ENCODE measurements at regions of chr3 and their contacts with region 1.

Region 1: DNA sequence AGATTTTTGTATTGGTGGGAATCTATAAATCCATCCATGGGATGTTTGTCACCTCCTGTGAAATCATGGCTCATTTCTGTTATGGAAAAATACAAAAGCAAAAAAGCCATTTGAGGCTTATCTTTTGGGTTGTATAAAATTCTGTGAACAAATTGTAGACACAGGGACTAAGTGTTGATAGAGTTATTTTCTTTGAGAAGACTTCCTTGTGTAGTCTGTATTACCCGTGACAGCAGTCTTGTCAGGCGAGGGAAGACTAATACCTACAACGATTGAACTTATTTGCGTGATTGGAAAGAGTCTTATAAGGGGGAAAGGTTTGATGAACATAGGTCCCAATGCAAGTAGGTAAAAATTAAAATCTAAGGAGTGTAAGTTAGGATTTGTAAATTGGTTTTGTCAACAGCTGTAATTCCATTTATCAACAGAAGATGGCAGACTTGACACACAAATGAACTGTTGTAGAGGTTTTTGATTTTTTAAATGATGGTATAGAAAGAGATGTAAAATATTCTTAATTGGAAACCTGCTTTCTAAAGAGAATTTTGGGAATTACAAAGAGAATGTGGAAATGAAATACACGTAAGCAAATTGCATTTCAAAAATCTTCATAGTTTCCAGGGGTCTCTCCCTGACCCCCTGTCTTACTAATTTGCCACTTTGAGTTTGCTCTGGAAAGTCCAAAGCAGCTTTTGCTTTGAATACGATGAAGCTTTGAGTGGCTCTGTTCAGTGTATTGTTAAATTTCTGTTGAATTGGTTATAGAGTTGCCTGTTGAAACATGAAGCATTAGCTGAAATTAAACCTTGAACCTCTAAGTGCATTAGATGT is 33.2 kb downstream of the SLC25A26 start:
- DNase-seq: peak; percentile 49
- H3K4me3 Mint-ChIP-seq: no peak overlapping the region
- H3K27ac Mint-ChIP-seq: no peak overlapping the region
- H3K4me1 Mint-ChIP-seq: no peaks in the 10 kb centered on the region
- H3K27me3 Mint-ChIP-seq: no peaks in the 10 kb centered on the region
- CTCF ChIP-seq: peak; percentile 59

Region 2: DNA sequence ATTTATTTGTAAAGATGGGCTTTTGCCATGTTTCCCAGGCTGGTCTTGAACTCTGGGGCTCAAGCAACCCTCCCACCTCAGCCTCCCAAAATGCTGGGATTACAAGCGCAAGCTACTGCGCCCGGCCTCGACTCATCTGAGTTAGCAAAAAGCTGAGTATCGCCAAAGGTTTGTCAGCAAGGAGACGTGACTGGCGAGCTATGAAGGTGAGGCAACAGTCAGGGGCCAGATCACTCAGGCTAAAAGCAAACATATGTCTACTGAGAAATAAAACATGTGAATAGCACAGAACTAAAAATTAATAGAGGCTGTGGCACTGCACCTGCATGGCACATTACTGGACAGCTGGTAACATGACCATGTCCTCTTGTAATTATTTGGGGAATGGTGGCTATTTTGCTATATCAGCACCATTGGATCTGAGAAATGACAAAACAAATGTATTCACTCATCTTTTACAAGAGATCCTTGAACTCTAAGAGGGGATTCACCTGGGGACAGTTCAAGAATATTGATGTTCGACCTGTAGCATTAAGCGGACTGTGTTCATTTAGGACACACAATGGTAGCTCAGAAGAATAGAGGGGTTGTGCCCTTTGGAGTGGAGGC is 43.2 kb before region 1 on chr3:
- CTCF ChIA-PET with region 1: no interaction called
- POLR2A ChIA-PET with region 1: no interaction called
- intact Hi-C with region 1: no loop called
- DNase-seq: no peak
- H3K4me3 Mint-ChIP-seq: no peak overlapping the region
- H3K27ac Mint-ChIP-seq: no peak overlapping the region
- H3K4me1 Mint-ChIP-seq: no peaks in the 10 kb centered on the region
- H3K27me3 Mint-ChIP-seq: peaks cover 3% of the 10 kb centered on the region
- CTCF ChIP-seq: no peak

Region 3: DNA sequence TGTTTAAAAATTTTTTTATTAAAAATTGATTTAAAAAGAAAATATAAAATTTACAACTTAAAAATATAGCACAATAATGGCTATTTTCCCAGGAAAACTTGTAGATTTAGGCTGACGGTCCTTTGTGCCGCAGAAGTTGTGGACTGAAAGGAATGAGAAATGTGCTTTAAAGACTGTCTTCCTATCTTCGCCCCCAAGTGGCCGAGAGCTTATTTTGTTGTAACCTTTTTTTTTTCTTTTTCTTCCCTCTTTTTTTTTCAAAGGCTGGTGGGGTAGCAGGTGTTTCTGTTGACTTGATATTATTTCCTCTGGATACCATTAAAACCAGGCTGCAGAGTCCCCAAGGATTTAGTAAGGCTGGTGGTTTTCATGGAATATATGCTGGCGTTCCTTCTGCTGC is 17.7 kb before region 1 on chr3:
- CTCF ChIA-PET with region 1: interaction called, 24 read pairs
- POLR2A ChIA-PET with region 1: no interaction called
- intact Hi-C with region 1: no loop called
- DNase-seq: peak; percentile 5
- H3K4me3 Mint-ChIP-seq: no peak overlapping the region
- H3K27ac Mint-ChIP-seq: no peak overlapping the region
- H3K4me1 Mint-ChIP-seq: no peaks in the 10 kb centered on the region
- H3K27me3 Mint-ChIP-seq: no peaks in the 10 kb centered on the region
- CTCF ChIP-seq: no peak

Region 4: DNA sequence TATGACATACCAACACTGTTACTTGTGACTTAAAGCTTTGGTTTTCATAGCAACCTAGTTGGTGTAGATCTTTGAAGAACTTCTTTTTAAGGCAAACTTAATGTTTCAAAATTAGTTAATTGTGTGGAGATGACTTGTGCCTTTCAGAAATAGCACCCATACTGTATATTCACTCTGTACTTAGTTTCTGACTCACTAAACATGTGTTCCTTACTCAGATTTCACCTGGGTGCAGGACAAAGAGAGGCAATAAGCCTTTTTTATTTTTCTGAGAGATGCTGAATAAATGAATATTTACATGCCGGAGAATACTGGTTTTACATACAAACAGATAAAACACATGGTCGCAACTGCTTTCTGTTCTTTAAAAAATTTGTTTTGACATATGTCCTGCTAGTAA is 11.6 kb after region 1 on chr3:
- CTCF ChIA-PET with region 1: interaction called, 10 read pairs
- POLR2A ChIA-PET with region 1: interaction called, 6 read pairs
- intact Hi-C with region 1: no loop called
- DNase-seq: no peak
- H3K4me3 Mint-ChIP-seq: no peak overlapping the region
- H3K27ac Mint-ChIP-seq: no peak overlapping the region
- H3K4me1 Mint-ChIP-seq: peaks cover 6% of the 10 kb centered on the region
- H3K27me3 Mint-ChIP-seq: no peaks in the 10 kb centered on the region
- CTCF ChIP-seq: no peak

Region 5: DNA sequence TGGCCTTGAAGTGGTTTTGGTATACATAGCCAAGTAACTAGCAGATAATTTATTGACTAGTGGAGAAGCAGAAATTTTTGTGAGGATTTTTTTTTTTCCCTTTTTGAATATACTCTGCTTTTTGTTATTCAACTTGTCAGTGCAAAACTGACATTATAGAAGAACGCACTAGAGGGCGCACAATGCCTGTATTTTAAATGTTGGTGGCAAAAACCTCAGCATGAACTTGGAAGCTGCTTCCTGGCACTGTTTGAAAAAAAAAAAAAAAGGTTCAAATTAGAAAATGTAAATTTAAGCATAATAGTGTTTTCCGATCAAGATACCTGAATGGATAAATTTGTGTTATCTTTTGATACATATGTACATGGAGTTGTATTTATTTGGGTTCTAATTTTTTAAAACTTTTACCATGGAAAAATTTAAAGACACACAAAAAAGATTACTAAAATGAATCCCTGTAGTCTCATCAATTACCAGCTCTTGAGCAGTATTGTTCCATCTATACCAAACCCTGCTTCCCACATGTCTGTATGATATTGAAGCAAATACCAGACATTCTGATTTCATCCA is 22.8 kb after region 1 on chr3:
- CTCF ChIA-PET with region 1: interaction called, 13 read pairs
- POLR2A ChIA-PET with region 1: interaction called, 3 read pairs
- intact Hi-C with region 1: no loop called
- DNase-seq: peak; percentile 68
- H3K4me3 Mint-ChIP-seq: no peak overlapping the region
- H3K27ac Mint-ChIP-seq: no peak overlapping the region
- H3K4me1 Mint-ChIP-seq: no peaks in the 10 kb centered on the region
- H3K27me3 Mint-ChIP-seq: no peaks in the 10 kb centered on the region
- CTCF ChIP-seq: peak; percentile 56